Mammary epithelial cell (primary cell): ENCODE measurements at regions of chr12 and their contacts with region 1.

Region 1: DNA sequence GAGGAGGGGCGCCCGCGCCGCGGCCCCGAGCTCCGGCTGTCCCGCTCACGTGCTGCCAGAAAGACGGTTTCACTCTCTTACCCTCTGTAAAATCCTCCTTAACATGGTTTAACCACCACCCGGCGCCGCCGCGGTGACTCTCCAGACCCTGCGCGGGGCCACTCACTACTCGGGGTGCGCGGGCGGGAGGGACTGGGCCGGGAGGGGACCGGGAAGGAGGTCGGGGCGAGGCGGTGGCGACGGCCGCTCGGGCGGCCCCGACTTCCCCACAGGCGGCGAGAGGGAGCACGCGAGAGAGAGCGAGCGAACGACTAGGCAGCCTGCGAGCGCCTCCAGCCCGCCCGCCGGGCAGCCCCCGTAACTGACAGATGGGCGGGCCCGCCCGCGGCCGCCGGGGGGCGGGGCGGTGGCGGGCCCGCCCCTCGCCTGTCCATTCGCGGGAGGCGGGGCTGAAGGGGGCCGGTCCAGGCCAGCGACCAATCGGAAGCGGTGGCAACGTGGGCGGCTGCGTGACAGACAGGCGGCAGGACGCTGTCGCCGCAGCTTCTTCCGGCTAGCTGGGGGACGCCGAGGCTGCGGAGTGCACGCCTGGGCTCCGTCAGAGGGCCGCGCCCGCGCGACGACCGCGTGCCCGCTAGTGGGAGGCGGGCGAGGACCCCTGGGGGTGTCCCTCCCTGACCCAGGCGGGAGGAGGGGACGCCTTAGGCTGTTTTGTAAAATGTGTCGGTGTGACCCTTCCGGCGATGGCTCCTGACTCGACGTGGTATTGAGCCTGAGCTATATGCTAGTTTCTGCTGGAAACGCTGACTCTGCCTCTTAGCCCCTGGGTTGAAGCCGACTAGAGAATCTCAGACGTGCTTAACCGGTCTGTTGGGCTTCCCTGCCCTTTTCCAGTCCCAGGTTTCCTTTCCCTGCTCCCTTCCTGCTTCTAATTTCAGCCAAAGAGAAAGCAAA is at the start of gene EEA1:
- DNase-seq: peak; percentile 96
- H3K4me3 ChIP-seq: peak within 1 kb of the TSS; percentile 66 to 75 (median 70)
- H3K27ac ChIP-seq: peak within 1 kb of the TSS; percentile 97
- H3K4me1 ChIP-seq: peaks cover 17% of the 10 kb centered on the region
- H3K27me3 ChIP-seq: no peaks in the 10 kb centered on the region
- CTCF ChIP-seq: no peak
- total RNA-seq, gene EEA1: 17.2 to 45.2 TPM

Region 2: DNA sequence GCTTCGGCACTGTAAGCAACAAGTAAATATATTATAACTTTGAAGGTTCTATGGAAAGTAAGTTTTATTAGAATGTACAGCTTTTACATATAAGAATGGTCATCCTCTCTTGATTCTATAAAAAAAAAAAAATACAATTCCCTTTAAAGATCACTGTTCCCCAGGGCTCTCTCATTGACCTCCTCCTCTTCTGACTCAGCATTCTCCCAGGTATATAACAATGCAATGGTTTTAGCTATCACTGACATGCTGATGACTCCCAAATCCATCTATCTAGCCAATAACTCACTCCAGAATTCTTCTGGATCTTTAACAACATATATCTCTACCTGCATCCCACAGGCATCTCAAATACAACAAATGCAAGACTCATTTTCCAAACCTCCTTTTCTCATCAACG is 62.8 kb before region 1 on chr12:
- CTCF ChIA-PET with region 1: no interaction called
- dilution Hi-C with region 1: no loop called
- in situ Hi-C with region 1: no loop called
- intact Hi-C with region 1: loop called (anchors 5 kb)
- DNase-seq: peak; percentile 35
- H3K4me3 ChIP-seq: no peak overlapping the region
- H3K27ac ChIP-seq: no peak overlapping the region
- H3K4me1 ChIP-seq: no peaks in the 10 kb centered on the region
- H3K27me3 ChIP-seq: no peaks in the 10 kb centered on the region
- CTCF ChIP-seq: no peak

Region 3: DNA sequence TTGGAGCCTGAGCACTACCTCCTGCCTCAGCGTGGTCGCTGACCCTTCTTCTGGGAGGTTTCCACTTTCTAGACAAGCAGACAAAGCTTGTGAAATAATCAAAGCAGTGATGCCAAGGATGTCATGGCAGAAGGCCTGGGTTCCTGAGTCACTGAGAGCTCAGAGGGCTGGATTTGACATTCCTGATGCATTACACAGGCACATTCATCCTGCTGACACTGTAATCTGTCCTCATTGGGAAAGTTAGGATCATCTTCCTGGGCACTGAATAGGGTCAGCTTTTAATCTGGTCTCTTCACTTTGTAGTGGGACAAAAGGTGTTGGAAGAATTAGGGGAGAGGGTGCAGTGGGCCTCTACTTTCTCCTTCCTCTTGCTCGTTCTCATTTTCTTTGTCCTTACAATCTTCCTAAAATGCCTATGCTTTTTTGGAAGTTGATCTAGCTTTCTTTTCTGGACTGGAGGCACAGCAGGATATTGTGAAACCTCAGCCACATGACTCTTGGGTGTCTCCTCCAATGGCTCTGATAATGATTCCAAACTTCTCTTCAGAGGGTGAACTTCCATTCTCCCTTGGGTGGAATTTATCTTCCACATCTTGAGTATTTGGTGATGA is 29.7 kb before region 1 on chr12:
- CTCF ChIA-PET with region 1: no interaction called
- dilution Hi-C with region 1: no loop called
- in situ Hi-C with region 1: no loop called
- intact Hi-C with region 1: loop called (anchors 1 kb)
- DNase-seq: peak; percentile 95
- H3K4me3 ChIP-seq: peak overlapping the region in 2 of 3 experiments; percentile 12 to 23
- H3K27ac ChIP-seq: peak overlapping the region; percentile 85
- H3K4me1 ChIP-seq: peaks cover 19% of the 10 kb centered on the region
- H3K27me3 ChIP-seq: no peaks in the 10 kb centered on the region
- CTCF ChIP-seq: no peak

Region 4: DNA sequence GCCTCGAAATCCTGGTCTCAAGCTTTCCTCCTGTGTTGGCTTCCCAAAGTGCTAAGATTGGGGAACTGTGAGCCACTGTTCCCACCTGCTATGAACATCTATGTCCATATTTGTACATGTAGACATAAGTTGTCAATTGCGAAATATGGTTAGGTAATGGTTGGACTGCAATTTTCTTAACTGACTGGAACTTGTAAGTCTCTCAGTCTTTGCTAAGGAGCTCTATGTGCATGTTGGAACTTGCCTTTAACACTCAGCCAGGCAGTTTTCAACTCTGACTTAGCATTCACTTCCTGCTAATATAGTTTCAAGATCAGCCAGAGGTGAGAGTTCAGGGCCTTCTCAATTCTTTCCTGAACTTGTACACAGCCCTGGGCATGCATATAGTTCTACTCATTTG is 44.4 kb after region 1 on chr12:
- CTCF ChIA-PET with region 1: no interaction called
- dilution Hi-C with region 1: no loop called
- in situ Hi-C with region 1: no loop called
- intact Hi-C with region 1: loop called (anchors 1 kb)
- DNase-seq: peak; percentile 97
- H3K4me3 ChIP-seq: no peak overlapping the region
- H3K27ac ChIP-seq: peak overlapping the region; percentile 60
- H3K4me1 ChIP-seq: peaks cover 42% of the 10 kb centered on the region
- H3K27me3 ChIP-seq: no peaks in the 10 kb centered on the region
- CTCF ChIP-seq: no peak

Region 5: GRCh38 chr12:92987362-92987761 is 58.1 kb after region 1 on chr12:
- CTCF ChIA-PET with region 1: no interaction called
- dilution Hi-C with region 1: no loop called
- in situ Hi-C with region 1: no loop called
- intact Hi-C with region 1: loop called (anchors 1 kb)
- DNase-seq: peak; percentile 58
- H3K4me3 ChIP-seq: no peak overlapping the region
- H3K27ac ChIP-seq: no peak overlapping the region
- H3K4me1 ChIP-seq: peaks cover 5% of the 10 kb centered on the region
- H3K27me3 ChIP-seq: no peaks in the 10 kb centered on the region
- CTCF ChIP-seq: peak; percentile 45 to 53

Region 6: DNA sequence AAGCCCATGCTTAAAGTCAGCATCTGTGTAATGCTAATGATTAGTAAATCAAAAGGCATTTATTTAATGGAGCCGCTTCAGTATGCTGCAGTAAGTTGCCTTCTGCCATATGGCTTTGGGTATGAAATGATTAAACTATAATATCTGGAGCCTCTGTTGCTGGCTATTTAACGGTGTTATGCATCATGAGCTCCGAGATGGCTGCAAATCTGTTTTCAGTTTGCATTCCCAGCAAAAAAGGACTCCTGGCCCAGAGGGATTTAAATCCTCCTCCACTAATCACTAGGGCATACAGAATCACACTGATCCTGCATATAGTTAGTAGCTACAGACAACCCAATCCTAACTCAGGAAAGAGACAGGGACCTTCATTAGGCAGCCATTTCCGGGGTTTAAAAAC is 171.4 kb after region 1 on chr12:
- CTCF ChIA-PET with region 1: no interaction called
- dilution Hi-C with region 1: no loop called
- in situ Hi-C with region 1: no loop called
- intact Hi-C with region 1: no loop called
- DNase-seq: no peak
- H3K4me3 ChIP-seq: no peak overlapping the region
- H3K27ac ChIP-seq: no peak overlapping the region
- H3K4me1 ChIP-seq: no peaks in the 10 kb centered on the region
- H3K27me3 ChIP-seq: no peaks in the 10 kb centered on the region
- CTCF ChIP-seq: no peak

Region 7: GRCh38 chr12:93127582-93128331 is 198.5 kb after region 1 on chr12:
- CTCF ChIA-PET with region 1: no interaction called
- dilution Hi-C with region 1: no loop called
- in situ Hi-C with region 1: no loop called
- intact Hi-C with region 1: loop called (anchors 10 kb)
- DNase-seq: peak; percentile 71
- H3K4me3 ChIP-seq: no peak overlapping the region
- H3K27ac ChIP-seq: no peak overlapping the region
- H3K4me1 ChIP-seq: peaks cover 28% of the 10 kb centered on the region
- H3K27me3 ChIP-seq: no peaks in the 10 kb centered on the region
- CTCF ChIP-seq: peak; percentile 50 to 59

Region 8: GRCh38 chr12:93466625-93467350 is 537.5 kb after region 1 on chr12:
- CTCF ChIA-PET with region 1: no interaction called
- dilution Hi-C with region 1: no loop called
- in situ Hi-C with region 1: no loop called
- intact Hi-C with region 1: no loop called
- DNase-seq: no peak
- H3K4me3 ChIP-seq: peak overlapping the region in 1 of 3 experiments; percentile 79
- H3K27ac ChIP-seq: peak overlapping the region; percentile 84
- H3K4me1 ChIP-seq: no peaks in the 10 kb centered on the region
- H3K27me3 ChIP-seq: no peaks in the 10 kb centered on the region
- CTCF ChIP-seq: no peak